ENCODE measurements at regions of chr2 and their contacts with region 1.

Region 1: GRCh38 chr2:240840435-240841080 is 20.5 kb upstream of the KIF1A start:
- DNase-seq: peak; percentile 96
- H3K4me3 ChIP-seq: no peak overlapping the region
- H3K27ac ChIP-seq: no peak overlapping the region
- H3K4me1 ChIP-seq: peaks cover 0 to 19% of the 10 kb centered on the region in 2 experiments; a peak in 1 of 4 replicates
- H3K27me3 ChIP-seq: no peaks in the 10 kb centered on the region; the same call in 1 of the 2 replicates
- CTCF ChIP-seq: peak; percentile 63
- EP300 ChIP-seq: no peak
- RAD21 ChIP-seq: peak; percentile 85

Region 2: GRCh38 chr2:240556553-240557100 is 283.9 kb before region 1 on chr2:
- CTCF ChIA-PET with region 1: no interaction called
- POLR2A ChIA-PET with region 1: no interaction called
- DNase-seq: peak; percentile 70
- H3K4me3 ChIP-seq: peak overlapping the region in 1 of 2 experiments; percentile 51; a peak in 1 of 4 replicates
- H3K27ac ChIP-seq: no peak overlapping the region
- H3K4me1 ChIP-seq: peaks cover 12 to 27% of the 10 kb centered on the region in 2 experiments; a peak in 3 of 4 replicates
- H3K27me3 ChIP-seq: no peaks in the 10 kb centered on the region
- CTCF ChIP-seq: peak; percentile 47; the same call in 1 of the 2 replicates
- EP300 ChIP-seq: no peak
- RAD21 ChIP-seq: no peak

Region 3: DNA sequence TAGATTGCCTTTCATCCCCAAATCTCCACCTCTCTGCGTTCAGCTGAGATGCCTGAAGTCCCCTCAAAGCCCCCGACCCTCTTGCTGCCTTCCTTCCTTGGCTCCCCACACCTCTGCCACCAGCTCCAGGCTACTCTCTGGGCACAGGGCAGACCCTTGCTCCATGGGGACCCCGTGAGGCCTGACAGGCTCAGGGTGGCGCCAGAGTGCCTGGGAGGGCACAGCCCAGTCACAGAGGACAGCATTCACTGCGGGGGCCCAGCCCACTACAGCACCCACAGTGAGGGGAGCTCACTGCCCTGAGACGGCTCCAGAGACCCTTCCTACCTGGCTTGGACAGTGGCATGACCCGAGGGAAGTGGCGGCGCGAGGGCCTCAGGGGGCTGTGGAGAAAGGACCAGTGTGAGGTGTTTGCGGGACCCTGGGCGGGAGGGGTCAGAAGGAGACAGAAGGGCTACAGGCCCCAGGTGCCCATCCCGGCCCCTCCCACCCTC is 97.9 kb before region 1 on chr2:
- CTCF ChIA-PET with region 1: interaction called, 22 read pairs
- POLR2A ChIA-PET with region 1: interaction called, 3 read pairs
- DNase-seq: no peak
- H3K4me3 ChIP-seq: no peak overlapping the region
- H3K27ac ChIP-seq: no peak overlapping the region
- H3K4me1 ChIP-seq: peaks cover 0 to 19% of the 10 kb centered on the region in 2 experiments; a peak in 1 of 4 replicates
- H3K27me3 ChIP-seq: no peaks in the 10 kb centered on the region
- CTCF ChIP-seq: no peak
- EP300 ChIP-seq: no peak
- RAD21 ChIP-seq: no peak

Region 4: GRCh38 chr2:240796543-240797499 is 43.7 kb before region 1 on chr2:
- CTCF ChIA-PET with region 1: interaction called, 10 read pairs
- POLR2A ChIA-PET with region 1: no interaction called
- DNase-seq: no peak
- H3K4me3 ChIP-seq: no peak overlapping the region
- H3K27ac ChIP-seq: no peak overlapping the region
- H3K4me1 ChIP-seq: peaks cover 0 to 5% of the 10 kb centered on the region in 2 experiments; a peak in 1 of 4 replicates
- H3K27me3 ChIP-seq: no peaks in the 10 kb centered on the region
- CTCF ChIP-seq: no peak
- EP300 ChIP-seq: no peak
- RAD21 ChIP-seq: no peak

Region 5: DNA sequence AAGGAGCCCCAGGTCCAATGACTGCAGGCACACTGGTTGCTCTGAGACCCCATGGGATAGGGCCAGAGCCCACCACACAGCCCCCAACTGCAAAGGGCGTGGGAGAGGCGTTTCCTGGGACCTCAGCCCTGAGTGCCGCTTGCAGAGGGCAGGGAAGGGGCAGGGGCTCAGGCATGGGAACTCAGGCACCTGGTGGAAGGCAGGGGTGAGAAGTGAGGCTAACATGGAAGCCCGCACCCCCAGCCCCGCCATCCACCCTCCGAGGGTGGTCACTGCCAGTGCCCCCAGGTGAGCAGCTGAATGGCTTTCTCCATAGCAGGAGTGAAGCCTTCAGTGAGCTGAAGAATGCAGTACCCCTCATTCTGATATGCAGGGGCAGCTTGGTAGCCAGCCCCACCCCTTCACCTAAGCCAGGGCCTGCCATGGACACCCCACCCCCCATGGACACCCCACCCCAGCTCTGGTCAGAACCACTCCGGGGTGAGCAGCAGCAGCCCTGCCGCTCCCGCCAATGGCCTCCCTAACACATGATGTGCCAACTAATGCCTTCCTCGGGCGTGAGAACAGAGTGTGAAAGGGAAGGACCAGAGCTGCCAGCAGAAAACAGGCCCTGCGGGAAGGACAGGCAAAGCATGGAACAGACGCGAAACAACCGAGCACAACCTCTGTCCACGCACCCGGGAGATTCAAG is 27.2 kb before region 1 on chr2:
- CTCF ChIA-PET with region 1: interaction called, 50 read pairs
- POLR2A ChIA-PET with region 1: interaction called, 10 read pairs
- DNase-seq: no peak
- H3K4me3 ChIP-seq: no peak overlapping the region
- H3K27ac ChIP-seq: no peak overlapping the region
- H3K4me1 ChIP-seq: peaks cover 0 to 11% of the 10 kb centered on the region in 2 experiments; a peak in 1 of 4 replicates
- H3K27me3 ChIP-seq: 0 out of 2 replicates have a peak, but pooled peaks cover 2% of the 10 kb centered on the region
- CTCF ChIP-seq: no peak
- EP300 ChIP-seq: no peak
- RAD21 ChIP-seq: no peak